CD14-positive monocyte (primary cell): ENCODE measurements at regions of chr11 and their contacts with region 1.

Region 1: DNA sequence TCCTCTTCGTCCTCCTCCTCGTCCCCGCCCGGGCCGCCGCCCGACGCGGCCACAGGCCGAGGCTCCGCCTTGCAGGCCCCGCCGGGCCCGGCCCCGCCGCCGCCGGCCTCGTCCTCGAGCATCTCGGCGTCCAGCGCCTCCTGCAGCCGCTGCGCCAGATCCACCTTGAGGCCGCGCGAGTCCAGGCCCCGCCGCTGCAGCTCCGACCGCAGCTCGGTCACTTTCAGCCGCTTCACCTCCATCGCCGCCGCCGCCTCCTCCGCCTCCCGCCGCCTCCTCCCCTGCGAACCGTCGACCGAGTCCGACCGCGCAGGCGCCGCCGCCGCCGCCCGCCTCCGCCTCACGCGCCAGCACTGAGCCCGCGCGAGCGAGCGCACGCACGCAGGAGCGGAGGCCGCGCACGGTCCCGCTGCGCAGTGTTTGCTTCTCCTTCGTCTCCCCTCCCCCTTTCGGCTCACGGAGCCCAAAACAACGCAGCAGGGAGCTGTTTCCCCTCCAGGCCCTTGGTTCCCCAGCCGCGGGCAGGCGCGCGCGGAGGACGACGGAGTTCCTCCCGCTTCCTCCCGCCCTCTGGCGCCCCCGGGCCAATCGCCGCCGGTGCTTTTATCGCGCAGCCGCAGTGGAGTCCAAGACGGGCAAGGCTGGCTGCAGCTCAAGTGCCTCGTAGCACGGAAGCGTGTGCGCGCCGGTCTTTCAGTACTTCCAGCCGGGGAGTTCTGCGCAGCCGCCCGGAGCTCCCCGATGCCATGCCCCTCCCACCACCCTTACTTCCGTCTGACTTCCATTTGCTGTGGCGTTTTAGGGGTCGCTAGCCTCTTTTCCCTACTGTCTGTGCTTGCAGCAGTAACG is at the start of gene HNRNPUL2:
- DNase-seq: peak; percentile 99
- H3K4me3 ChIP-seq: peak within 1 kb of the TSS; percentile 84 to 97 (median 91)
- H3K4me3 Mint-ChIP-seq: peak within 1 kb of the TSS; percentile 91 to 98
- H3K27ac ChIP-seq: peak within 1 kb of the TSS; percentile 88 to 91
- H3K27ac Mint-ChIP-seq: peak within 1 kb of the TSS; percentile 94 to 98 (median 98)
- H3K4me1 ChIP-seq: peaks cover 36 to 45% of the 10 kb centered on the region in 2 donors
- H3K4me1 Mint-ChIP-seq: peaks cover 47% of the 10 kb centered on the region
- H3K27me3 ChIP-seq: no peaks in the 10 kb centered on the region
- H3K27me3 Mint-ChIP-seq: no peaks in the 10 kb centered on the region
- CTCF ChIP-seq: no peak
- polyA plus RNA-seq, gene HNRNPUL2: 0.33 to 13.8 (median 0.88) TPM

Region 2: GRCh38 chr11:62705880-62706849 is 21.0 kb before region 1 on chr11:
- intact Hi-C with region 1: loop called (anchors 1 kb)
- DNase-seq: peak; percentile 89 to 93 (median 91)
- H3K4me3 ChIP-seq: peak overlapping the region; percentile 70 to 91 (median 84)
- H3K4me3 Mint-ChIP-seq: peak overlapping the region; percentile 89 to 92
- H3K27ac ChIP-seq: peak overlapping the region; percentile 78 to 85
- H3K27ac Mint-ChIP-seq: peak overlapping the region; percentile 89 to 99 (median 94)
- H3K4me1 ChIP-seq: peaks cover 67 to 85% of the 10 kb centered on the region in 2 donors
- H3K4me1 Mint-ChIP-seq: peaks cover 57% of the 10 kb centered on the region
- H3K27me3 ChIP-seq: no peaks in the 10 kb centered on the region
- H3K27me3 Mint-ChIP-seq: no peaks in the 10 kb centered on the region
- CTCF ChIP-seq: no peak

Region 3: GRCh38 chr11:62771144-62772021 is 44.2 kb after region 1 on chr11 and contains the start of gene TAF6L:
- intact Hi-C with region 1: loop called (anchors 5 kb)
- DNase-seq: peak; percentile 94 to 98 (median 96)
- H3K4me3 ChIP-seq: peak within 1 kb of the TSS; percentile 64 to 87 (median 65)
- H3K4me3 Mint-ChIP-seq: peak within 1 kb of the TSS; percentile 84 to 94
- H3K27ac ChIP-seq: peak within 1 kb of the TSS; percentile 63 to 86
- H3K27ac Mint-ChIP-seq: peak within 1 kb of the TSS; percentile 89 to 98 (median 95)
- H3K4me1 ChIP-seq: peaks cover 27 to 37% of the 10 kb centered on the region in 2 donors
- H3K4me1 Mint-ChIP-seq: peaks cover 34% of the 10 kb centered on the region
- H3K27me3 ChIP-seq: no peaks in the 10 kb centered on the region
- H3K27me3 Mint-ChIP-seq: peaks cover 0 to 2% (median 0%) of the 10 kb centered on the region in 3 donors
- CTCF ChIP-seq: no peak
- polyA plus RNA-seq, gene TAF6L: 5.1 to 35.5 (median 5.3) TPM